AG04450 (cell line): ENCODE measurements at regions of chr20 and their contacts with region 1.

Region 1: GRCh38 chr20:22691369-22692118 is 107.2 kb upstream of the FOXA2 start:
- DNase-seq: peak; percentile 34
- H3K4me3 ChIP-seq: no peak overlapping the region
- H3K27ac ChIP-seq: no peak overlapping the region
- H3K27me3 ChIP-seq: no peaks in the 10 kb centered on the region
- CTCF ChIP-seq: peak; percentile 89

Region 2: DNA sequence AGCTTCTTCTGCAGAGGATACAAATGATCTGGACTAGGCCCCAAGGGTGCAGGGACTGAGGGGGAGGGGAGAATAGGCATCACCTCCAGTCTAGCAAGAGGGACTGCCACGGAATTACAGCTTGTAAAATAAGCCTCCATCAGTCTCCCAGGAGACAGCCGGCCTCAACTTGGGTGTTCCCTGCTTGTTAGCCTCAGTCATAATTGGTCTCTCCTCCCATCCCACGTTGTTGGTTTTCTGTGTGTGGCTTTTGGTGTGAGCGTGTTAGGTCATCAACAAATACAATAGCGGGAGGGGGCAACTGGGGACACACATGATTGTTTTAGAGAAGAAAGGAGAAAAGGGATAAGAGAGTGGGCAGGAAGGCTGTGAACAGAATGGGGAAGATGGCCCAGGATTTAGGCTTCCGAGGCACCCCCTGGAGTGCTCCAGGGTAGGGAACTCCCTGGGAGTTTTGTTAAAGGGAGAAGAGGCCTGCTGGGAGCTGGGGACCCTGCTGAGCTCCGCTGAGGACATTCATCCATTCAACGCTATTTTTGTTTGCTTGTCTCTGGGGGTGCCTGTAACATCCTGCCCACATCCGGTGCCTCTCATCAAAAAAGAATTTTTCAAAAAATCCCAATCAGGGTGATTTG is 116.3 kb before region 1 on chr20:
- CTCF ChIA-PET with region 1: no interaction called
- POLR2A ChIA-PET with region 1: no interaction called
- DNase-seq: no peak
- H3K4me3 ChIP-seq: no peak overlapping the region
- H3K27ac ChIP-seq: no peak overlapping the region
- H3K27me3 ChIP-seq: peaks cover 56% of the 10 kb centered on the region
- CTCF ChIP-seq: no peak

Region 3: DNA sequence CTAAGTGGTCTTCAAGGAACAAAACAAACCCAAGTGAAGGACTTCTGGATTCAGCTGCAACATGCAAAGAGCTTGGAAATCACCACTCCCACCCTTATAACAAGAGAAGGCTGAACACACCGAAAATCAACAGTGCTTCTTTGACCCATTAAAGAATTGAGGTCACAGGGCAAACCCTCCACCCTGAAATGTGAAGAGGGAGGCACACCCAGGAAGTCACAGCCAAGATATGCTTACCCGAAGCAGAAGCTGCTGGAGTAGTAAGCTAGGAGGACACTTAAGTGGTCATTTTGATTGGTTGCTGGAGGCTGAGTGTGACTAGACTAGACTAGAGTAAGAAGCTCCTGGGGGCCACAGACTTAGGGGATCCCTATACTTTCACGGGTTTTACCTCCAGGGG is 155.3 kb after region 1 on chr20:
- CTCF ChIA-PET with region 1: interaction called, 14 read pairs
- POLR2A ChIA-PET with region 1: no interaction called
- DNase-seq: no peak
- H3K4me3 ChIP-seq: no peak overlapping the region
- H3K27ac ChIP-seq: no peak overlapping the region
- H3K27me3 ChIP-seq: no peaks in the 10 kb centered on the region
- CTCF ChIP-seq: no peak

Region 4: GRCh38 chr20:23050847-23051631 is 359.5 kb after region 1 on chr20:
- CTCF ChIA-PET with region 1: interaction called, 11 read pairs
- POLR2A ChIA-PET with region 1: no interaction called
- DNase-seq: peak; percentile 27
- H3K4me3 ChIP-seq: peak overlapping the region; percentile 56
- H3K27ac ChIP-seq: no peak overlapping the region
- H3K27me3 ChIP-seq: peaks cover 63% of the 10 kb centered on the region
- CTCF ChIP-seq: peak; percentile 75

Region 5: GRCh38 chr20:23245553-23246181 is 554.1 kb after region 1 on chr20:
- CTCF ChIA-PET with region 1: interaction called, 17 read pairs
- POLR2A ChIA-PET with region 1: no interaction called
- DNase-seq: no peak
- H3K4me3 ChIP-seq: no peak overlapping the region
- H3K27ac ChIP-seq: no peak overlapping the region
- H3K27me3 ChIP-seq: peaks cover 21% of the 10 kb centered on the region
- CTCF ChIP-seq: peak; percentile 65

Region 6: GRCh38 chr20:23350196-23350903 is 658.8 kb after region 1 on chr20 and contains the start of gene NXT1:
- CTCF ChIA-PET with region 1: interaction called, 26 read pairs
- POLR2A ChIA-PET with region 1: interaction called, 6 read pairs
- DNase-seq: peak; percentile 97
- H3K4me3 ChIP-seq: peak within 1 kb of the TSS; percentile 90
- H3K27ac ChIP-seq: peak within 1 kb of the TSS; percentile 99
- H3K27me3 ChIP-seq: no peaks in the 10 kb centered on the region
- CTCF ChIP-seq: no peak
- polyA plus RNA-seq, gene NXT1: 17.9 and 19.5 TPM in 2 replicates